ENCODE measurements at regions of chr14 and their contacts with region 1.

Region 1: DNA sequence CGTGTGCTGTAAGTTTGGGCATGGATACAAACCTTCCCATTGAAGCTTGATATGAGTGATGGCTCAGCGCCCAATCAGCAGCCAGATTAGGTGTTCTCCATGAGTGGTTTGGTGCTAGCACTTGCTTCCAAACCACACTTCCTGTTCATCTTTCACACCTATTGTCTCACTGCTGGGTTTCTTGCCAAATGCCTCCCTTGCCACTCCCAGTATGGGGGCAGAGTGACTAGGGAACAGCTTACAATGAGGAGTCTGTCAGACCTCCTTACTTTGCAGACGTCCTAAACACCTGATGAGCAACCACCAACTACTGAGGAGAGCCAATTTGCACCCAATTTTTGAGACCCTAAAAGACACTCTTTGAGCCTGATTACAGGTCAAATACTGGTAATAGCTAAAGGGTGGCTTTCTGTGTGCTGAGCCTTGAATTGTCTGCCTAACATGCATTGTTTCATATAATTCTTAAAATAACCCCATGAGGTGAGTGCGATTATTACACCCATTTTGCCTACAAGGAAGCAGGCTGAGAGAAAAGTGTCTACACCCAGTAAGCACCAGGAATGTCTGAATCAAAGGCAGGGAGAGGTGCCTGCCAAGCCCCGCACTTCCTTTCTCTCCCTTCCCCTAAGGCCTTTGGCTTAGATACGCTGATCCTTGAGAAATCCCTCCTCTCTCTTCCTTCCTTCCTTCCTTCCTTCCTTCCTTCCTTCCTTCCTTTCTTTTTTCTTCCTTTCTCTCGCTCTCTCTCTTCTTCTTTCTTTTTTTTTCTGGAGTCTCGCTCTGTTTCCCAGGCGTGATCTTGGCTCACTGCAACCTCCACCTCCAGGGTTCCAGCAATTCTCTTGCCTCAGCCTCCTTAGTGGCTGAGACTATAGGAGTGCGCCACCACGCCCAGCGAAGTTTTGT is 48.2 kb upstream of the FOS start:
- DNase-seq: no peak
- H3K4me3 ChIP-seq: no peak overlapping the region
- H3K27ac ChIP-seq: no peak overlapping the region
- H3K4me1 ChIP-seq: peaks cover 0 to 10% (median 0%) of the 10 kb centered on the region in 4 donors
- H3K27me3 ChIP-seq: no peaks in the 10 kb centered on the region
- CTCF ChIP-seq: no peak

Region 2: GRCh38 chr14:74867673-74868072 is 362.7 kb before region 1 on chr14:
- intact Hi-C with region 1: no loop called
- DNase-seq: peak in 1 of 2 donors; percentile 37
- H3K4me3 ChIP-seq: no peak overlapping the region
- H3K27ac ChIP-seq: no peak overlapping the region
- H3K4me1 ChIP-seq: no peaks in the 10 kb centered on the region
- H3K27me3 ChIP-seq: no peaks in the 10 kb centered on the region
- CTCF ChIP-seq: no peak

Region 3: DNA sequence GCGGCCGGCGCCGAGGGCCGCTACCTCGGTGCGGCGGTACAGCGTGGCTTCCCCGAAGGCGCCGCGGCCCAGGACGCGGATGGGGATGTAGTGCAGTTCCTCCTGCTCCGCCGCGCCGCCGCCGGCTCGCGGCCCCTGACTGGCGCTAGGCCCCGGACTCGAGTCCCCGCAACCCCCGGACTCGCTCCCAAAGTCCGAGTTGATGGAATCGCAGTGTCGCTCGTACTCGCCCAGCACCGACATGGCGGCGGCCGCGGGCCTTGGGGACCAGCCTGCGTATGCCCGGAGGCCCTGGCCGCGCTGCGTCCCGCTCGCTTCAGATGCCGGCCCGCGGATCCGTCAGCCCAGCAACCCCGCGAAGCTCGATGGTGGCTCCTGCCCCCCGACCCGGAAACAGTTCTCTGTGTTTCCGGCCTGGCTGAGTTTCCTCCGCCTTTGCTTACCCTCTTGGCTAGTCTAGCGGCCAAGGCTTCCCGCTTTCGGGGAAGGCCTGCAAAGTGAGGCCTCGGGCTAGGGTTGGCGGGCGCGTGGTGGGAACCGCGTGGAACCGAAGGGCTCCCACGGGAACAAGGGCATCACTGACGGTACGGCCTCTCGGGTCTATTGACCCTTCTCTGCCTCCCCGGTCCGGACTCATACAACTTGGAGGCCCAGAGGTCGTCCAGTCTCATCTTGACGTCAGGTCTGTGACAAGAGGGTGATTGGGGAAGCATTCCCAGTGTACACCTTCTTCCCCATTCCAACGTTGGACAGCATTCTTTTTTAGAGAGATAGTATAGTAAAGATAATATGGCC is 103.5 kb before region 1 on chr14 and contains the start of gene NEK9:
- intact Hi-C with region 1: loop called (anchors 5 kb)
- DNase-seq: peak; percentile 89 to 95
- H3K4me3 ChIP-seq: peak within 1 kb of the TSS; percentile 87 to 88
- H3K27ac ChIP-seq: peak within 1 kb of the TSS; percentile 94 to 96
- H3K4me1 ChIP-seq: peaks cover 2 to 44% (median 21%) of the 10 kb centered on the region in 4 donors
- H3K27me3 ChIP-seq: no peaks in the 10 kb centered on the region
- CTCF ChIP-seq: no peak

Region 4: GRCh38 chr14:75182841-75183624 is 47.4 kb before region 1 on chr14:
- intact Hi-C with region 1: loop called (anchors 5 kb)
- DNase-seq: peak in 1 of 2 donors; percentile 46
- H3K4me3 ChIP-seq: no peak overlapping the region
- H3K27ac ChIP-seq: peak overlapping the region; percentile 79 to 86
- H3K4me1 ChIP-seq: peaks cover 0 to 48% (median 32%) of the 10 kb centered on the region in 4 donors
- H3K27me3 ChIP-seq: no peaks in the 10 kb centered on the region
- CTCF ChIP-seq: no peak

Region 5: GRCh38 chr14:75198291-75198933 is 32.0 kb before region 1 on chr14:
- intact Hi-C with region 1: loop called (anchors 5 kb)
- DNase-seq: peak in 1 of 2 donors; percentile 77
- H3K4me3 ChIP-seq: no peak overlapping the region
- H3K27ac ChIP-seq: peak overlapping the region; percentile 21 to 44
- H3K4me1 ChIP-seq: peaks cover 0 to 16% (median 12%) of the 10 kb centered on the region in 4 donors
- H3K27me3 ChIP-seq: no peaks in the 10 kb centered on the region
- CTCF ChIP-seq: no peak

Region 6: DNA sequence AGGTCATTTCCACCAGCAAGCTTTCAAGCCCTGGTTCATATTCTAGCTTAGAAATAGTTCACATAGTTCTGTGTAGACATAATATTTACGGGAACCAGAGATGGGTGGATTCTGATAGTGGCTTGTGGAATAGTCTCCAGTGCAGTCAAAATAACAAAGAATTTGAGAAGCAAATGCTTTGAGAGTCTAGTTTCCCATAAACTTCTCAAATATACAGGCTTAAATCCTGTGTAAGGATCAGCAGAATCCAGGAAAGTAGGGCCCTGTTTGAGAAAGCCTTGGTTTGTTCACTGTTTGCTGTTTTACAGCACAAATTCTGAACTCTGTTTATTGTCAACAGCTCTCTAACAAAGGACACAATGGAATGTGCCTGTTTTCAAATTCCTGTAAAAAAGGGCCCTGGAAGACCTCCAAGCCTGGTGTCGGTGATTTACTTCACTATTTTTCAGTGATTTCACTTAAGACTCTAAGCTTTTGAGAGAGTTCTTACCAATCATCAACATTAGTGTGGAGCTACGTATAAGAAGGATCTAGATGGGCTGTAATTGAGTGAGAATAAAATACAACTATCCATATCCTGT is 36.8 kb after region 1 on chr14:
- intact Hi-C with region 1: no loop called
- DNase-seq: no peak
- H3K4me3 ChIP-seq: no peak overlapping the region
- H3K27ac ChIP-seq: peak overlapping the region; percentile 65 to 82
- H3K4me1 ChIP-seq: peaks cover 0 to 28% (median 21%) of the 10 kb centered on the region in 4 donors
- H3K27me3 ChIP-seq: no peaks in the 10 kb centered on the region
- CTCF ChIP-seq: no peak

Region 7: GRCh38 chr14:75340921-75341320 is 110.5 kb after region 1 on chr14:
- intact Hi-C with region 1: no loop called
- DNase-seq: peak; percentile 94 to 95
- H3K4me3 ChIP-seq: no peak overlapping the region
- H3K27ac ChIP-seq: peak overlapping the region; percentile 64 to 70
- H3K4me1 ChIP-seq: peaks cover 0 to 45% (median 15%) of the 10 kb centered on the region in 4 donors
- H3K27me3 ChIP-seq: no peaks in the 10 kb centered on the region
- CTCF ChIP-seq: no peak